ENCODE measurements at regions of chr1 and their contacts with region 1.

Region 1: DNA sequence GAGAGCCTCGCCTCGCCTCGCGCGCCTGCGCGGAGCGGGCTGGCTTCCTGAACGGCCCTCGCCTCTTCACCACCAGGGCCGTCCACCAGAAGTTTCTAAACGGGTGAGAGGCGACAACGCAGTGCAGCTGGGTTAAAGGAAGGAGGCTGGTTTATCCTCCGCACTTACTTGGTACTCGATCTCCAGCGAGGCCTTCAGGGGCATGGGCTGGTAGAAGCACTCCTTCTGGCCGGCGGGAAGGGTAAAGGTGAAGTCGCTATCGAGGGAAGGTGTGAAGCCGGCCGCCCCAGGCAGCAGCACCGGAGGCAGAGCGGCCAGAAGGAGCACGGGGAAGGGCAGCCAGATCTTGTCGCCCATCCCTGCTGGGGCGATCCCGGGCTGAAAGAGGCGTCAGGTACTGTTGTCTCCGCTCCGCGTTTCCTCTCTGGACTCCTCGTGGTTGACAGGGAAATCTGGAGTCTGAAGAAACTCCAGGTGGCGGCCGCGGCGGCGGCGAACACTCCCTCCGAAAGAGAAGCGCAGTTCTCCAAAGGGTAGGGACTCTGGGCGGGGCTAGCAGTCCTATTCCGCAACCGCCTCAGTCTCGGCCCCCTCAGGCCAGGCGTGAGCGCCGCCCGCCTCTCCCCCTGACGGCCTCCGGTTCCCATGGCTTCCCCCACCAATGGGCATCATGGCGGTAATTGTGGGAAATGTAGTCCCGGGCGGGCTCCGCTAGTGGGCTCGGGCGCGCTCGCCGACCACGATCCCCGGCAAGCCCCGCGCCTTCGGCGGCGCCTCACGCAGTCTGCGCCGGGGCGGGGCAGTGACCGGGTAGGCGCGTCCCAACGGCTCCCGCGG is at the start of gene TMED5:
- DNase-seq: peak; percentile 90 to 98 (median 95)
- ATAC-seq: peak; percentile 81
- H3K4me3 ChIP-seq: peak within 1 kb of the TSS; percentile 75 to 97
- H3K4me3 Mint-ChIP-seq: peak within 1 kb of the TSS; percentile 91
- H3K27ac ChIP-seq: peak within 1 kb of the TSS; percentile 83 to 98
- H3K27ac Mint-ChIP-seq: peak within 1 kb of the TSS; percentile 97
- H3K4me1 ChIP-seq: peaks cover 33% of the 10 kb centered on the region
- H3K4me1 Mint-ChIP-seq: peaks cover 49% of the 10 kb centered on the region
- H3K27me3 ChIP-seq: no peaks in the 10 kb centered on the region
- H3K27me3 Mint-ChIP-seq: no peaks in the 10 kb centered on the region
- CTCF ChIP-seq: peak; percentile 32
- total RNA-seq, gene TMED5: 38.3 to 38.8 TPM

Region 2: DNA sequence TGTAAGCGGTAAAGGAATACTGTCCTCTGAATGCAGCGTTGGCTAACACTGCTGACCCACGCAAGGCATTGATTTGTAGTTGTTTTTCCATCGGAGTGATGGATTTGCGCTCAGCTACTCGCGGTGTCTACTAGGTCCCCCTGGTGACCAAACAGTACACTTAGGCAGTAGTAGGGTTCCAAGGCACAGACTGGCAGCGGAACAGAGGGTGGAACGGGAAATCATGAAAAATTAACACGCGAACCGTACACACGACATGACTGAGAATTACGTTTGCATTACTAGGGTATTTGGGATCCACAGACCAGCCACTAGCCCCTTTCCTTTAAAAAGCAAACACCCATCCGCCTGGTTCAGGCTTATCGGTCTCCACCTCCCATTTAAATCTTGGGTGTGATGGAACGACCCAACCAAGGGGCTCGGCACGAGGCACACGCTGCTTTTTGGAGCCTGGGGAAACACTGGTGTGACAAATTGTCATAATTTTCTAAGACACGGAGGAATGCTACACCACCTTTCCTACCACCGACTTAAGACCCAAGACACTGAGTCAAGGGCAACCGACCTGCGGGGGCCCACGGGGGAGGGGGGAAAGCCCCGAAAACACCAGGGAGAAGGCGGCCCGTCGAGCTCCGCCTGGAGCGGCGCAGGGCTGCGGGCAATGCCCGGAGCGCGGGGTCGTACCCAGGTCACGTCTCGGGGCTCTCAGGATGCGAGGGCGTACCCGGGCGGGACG is 219.5 kb before region 1 on chr1:
- CTCF ChIA-PET with region 1: no interaction called
- POLR2A ChIA-PET with region 1: no interaction called
- intact Hi-C with region 1: loop called (anchors 1 to 5 kb)
- DNase-seq: peak; percentile 40 to 90 (median 62)
- ATAC-seq: peak; percentile 41
- H3K4me3 ChIP-seq: peak overlapping the region; percentile 81 to 82
- H3K4me3 Mint-ChIP-seq: peak overlapping the region; percentile 92
- H3K27ac ChIP-seq: peak overlapping the region; percentile 85 to 87
- H3K27ac Mint-ChIP-seq: peak overlapping the region; percentile 96
- H3K4me1 ChIP-seq: peaks cover 57% of the 10 kb centered on the region
- H3K4me1 Mint-ChIP-seq: peaks cover 40% of the 10 kb centered on the region
- H3K27me3 ChIP-seq: no peaks in the 10 kb centered on the region
- H3K27me3 Mint-ChIP-seq: no peaks in the 10 kb centered on the region
- CTCF ChIP-seq: peak; percentile 58

Region 3: GRCh38 chr1:93042187-93043056 is 137.7 kb before region 1 on chr1:
- CTCF ChIA-PET with region 1: no interaction called
- POLR2A ChIA-PET with region 1: no interaction called
- intact Hi-C with region 1: loop called (anchors 1 to 5 kb)
- DNase-seq: peak in 6 of 9 experiments; percentile 11 to 92 (median 20)
- ATAC-seq: peak; percentile 99
- H3K4me3 ChIP-seq: peak overlapping the region; percentile 32 to 44
- H3K4me3 Mint-ChIP-seq: peak overlapping the region; percentile 83
- H3K27ac ChIP-seq: peak overlapping the region; percentile 40 to 93
- H3K27ac Mint-ChIP-seq: peak overlapping the region; percentile 95
- H3K4me1 ChIP-seq: peaks cover 12% of the 10 kb centered on the region
- H3K4me1 Mint-ChIP-seq: peaks cover 13% of the 10 kb centered on the region
- H3K27me3 ChIP-seq: no peaks in the 10 kb centered on the region
- H3K27me3 Mint-ChIP-seq: no peaks in the 10 kb centered on the region
- CTCF ChIP-seq: no peak

Region 4: DNA sequence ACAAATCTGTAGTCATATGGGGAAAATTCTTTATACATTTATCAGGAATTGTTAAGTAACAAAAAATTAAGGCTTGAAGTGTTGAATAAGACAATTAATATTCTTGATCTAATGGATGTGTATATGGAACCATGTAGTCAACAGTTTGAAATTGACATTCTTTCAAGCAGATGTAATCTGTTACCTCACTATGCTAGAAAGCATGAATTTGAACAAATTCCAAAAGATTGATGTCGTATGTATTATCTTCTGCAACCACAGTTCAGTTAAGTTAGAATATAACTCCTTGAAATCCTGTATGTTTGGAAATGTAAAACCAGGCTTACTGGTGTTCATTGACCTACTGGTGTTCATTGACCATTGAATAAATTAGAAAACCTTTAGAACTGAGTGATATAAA is 16.5 kb after region 1 on chr1:
- CTCF ChIA-PET with region 1: no interaction called
- POLR2A ChIA-PET with region 1: no interaction called
- intact Hi-C with region 1: no loop called
- DNase-seq: no peak
- ATAC-seq: no peak
- H3K4me3 ChIP-seq: no peak overlapping the region
- H3K4me3 Mint-ChIP-seq: no peak overlapping the region
- H3K27ac ChIP-seq: no peak overlapping the region
- H3K27ac Mint-ChIP-seq: no peak overlapping the region
- H3K4me1 ChIP-seq: no peaks in the 10 kb centered on the region
- H3K4me1 Mint-ChIP-seq: no peaks in the 10 kb centered on the region
- H3K27me3 ChIP-seq: no peaks in the 10 kb centered on the region
- H3K27me3 Mint-ChIP-seq: no peaks in the 10 kb centered on the region
- CTCF ChIP-seq: no peak

Region 5: GRCh38 chr1:93219443-93219842 is 39.3 kb after region 1 on chr1:
- CTCF ChIA-PET with region 1: no interaction called
- POLR2A ChIA-PET with region 1: no interaction called
- intact Hi-C with region 1: loop called in 1 of 2 experiments (anchors 5 kb)
- DNase-seq: peak in 2 of 9 experiments; percentile 8 to 21
- ATAC-seq: peak; percentile 31
- H3K4me3 ChIP-seq: peak overlapping the region; percentile 2 to 34
- H3K4me3 Mint-ChIP-seq: peak overlapping the region; percentile 76
- H3K27ac ChIP-seq: no peak overlapping the region
- H3K27ac Mint-ChIP-seq: no peak overlapping the region
- H3K4me1 ChIP-seq: no peaks in the 10 kb centered on the region
- H3K4me1 Mint-ChIP-seq: peaks cover 12% of the 10 kb centered on the region
- H3K27me3 ChIP-seq: no peaks in the 10 kb centered on the region
- H3K27me3 Mint-ChIP-seq: no peaks in the 10 kb centered on the region
- CTCF ChIP-seq: no peak

Region 6: DNA sequence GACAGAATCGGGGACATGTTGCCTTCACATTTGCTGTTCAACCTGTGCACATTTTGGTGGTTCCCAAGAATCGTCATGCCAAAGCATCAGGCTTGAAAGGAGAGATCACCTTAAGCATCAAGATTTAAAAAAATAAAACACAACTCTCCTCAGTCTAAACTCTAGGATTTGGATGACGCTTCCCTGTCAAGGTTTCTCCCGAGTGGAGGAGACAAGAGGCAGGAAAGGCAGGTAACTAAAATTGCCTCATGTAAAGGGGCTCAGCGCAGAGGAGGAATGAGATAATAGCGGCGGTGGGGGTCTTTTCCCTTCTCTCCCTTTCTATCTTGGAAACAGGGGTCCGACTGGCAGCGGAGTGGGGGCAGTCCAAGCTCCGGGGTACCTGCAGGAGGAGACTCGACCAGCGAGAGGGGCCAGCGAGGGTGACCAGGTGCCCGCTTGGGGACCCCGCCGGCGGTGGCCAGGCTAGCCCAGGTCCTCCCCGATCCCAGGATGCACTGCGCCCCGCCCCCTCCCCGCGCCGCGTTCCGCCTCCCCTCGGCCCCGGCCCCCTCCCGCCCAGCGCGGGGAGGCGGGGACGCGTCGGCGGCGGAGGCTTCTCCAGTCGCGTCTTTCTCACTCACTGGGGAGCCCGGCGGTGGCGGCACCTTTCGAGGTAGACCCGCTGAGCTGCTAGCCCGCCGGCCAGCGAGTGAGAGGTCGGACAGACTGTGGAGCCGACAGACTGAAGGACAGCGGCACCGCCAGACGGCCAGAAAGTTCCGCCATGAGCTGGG is 267.6 kb after region 1 on chr1 and contains the start of gene FNBP1L:
- CTCF ChIA-PET with region 1: no interaction called
- POLR2A ChIA-PET with region 1: no interaction called
- intact Hi-C with region 1: loop called in 1 of 2 experiments (anchors 2 kb)
- DNase-seq: peak in 8 of 9 experiments; percentile 34 to 69 (median 51)
- ATAC-seq: peak; percentile 74
- H3K4me3 ChIP-seq: peak within 1 kb of the TSS; percentile 53 to 66
- H3K4me3 Mint-ChIP-seq: peak within 1 kb of the TSS; percentile 91
- H3K27ac ChIP-seq: no peak within 1 kb of the TSS
- H3K27ac Mint-ChIP-seq: no peak within 1 kb of the TSS
- H3K4me1 ChIP-seq: peaks cover 20% of the 10 kb centered on the region
- H3K4me1 Mint-ChIP-seq: peaks cover 17% of the 10 kb centered on the region
- H3K27me3 ChIP-seq: peaks cover 18 to 28% of the 10 kb centered on the region in 2 experiments
- H3K27me3 Mint-ChIP-seq: peaks cover 47% of the 10 kb centered on the region
- CTCF ChIP-seq: no peak
- total RNA-seq, gene FNBP1L: 0.31 to 0.35 TPM

Region 7: DNA sequence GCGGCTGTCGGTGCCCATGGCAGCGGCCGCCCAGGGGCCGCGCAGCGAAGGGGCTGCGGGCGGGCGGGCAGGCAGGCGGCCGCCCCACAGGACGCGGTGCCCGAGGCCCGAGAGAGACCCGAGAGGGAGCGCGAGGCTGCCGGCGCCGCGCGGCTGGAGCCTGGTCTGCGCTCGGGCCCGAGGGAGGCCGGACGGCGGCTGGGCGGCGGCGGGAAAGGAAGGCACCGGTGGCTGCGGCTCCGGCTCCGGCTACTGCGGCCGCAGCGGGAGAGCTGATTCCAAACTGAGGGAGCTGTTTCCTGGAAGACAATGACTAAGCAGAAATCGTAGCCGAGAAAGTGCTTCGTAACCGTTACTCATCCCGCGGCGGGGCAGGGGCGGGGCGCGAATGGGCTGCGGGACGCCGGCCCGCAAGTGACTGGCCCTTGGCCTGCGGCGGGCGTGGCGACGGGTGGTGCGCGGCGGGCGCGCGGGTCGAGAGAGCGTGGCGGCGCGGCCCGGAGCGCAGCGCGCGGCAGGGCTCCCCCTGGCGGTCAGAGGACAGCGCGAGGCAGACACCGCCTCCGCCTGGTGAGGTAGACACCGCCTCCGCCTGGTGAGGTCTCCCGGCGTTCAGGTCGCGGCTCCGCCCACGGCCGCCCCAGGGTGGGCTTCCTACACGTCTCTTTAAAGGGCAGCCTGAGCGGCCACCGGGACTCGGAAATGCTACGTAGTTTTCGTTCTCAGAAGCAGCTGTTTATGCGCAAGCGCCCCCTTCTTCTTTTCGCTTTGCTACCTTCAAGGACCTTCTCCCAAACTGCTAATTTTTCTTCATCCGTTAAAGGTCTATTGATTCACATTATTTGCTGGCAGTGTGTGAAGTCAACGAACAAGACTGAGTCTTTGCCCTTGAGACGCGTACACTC is 729.3 kb after region 1 on chr1 and contains the start of gene GCLM:
- CTCF ChIA-PET with region 1: no interaction called
- POLR2A ChIA-PET with region 1: no interaction called
- intact Hi-C with region 1: loop called (anchors 2 to 10 kb)
- DNase-seq: peak; percentile 76 to 95 (median 91)
- ATAC-seq: peak; percentile 89
- H3K4me3 ChIP-seq: peak within 1 kb of the TSS; percentile 62 to 67
- H3K4me3 Mint-ChIP-seq: peak within 1 kb of the TSS; percentile 88
- H3K27ac ChIP-seq: peak within 1 kb of the TSS; percentile 72 to 76
- H3K27ac Mint-ChIP-seq: peak within 1 kb of the TSS; percentile 92
- H3K4me1 ChIP-seq: peaks cover 12% of the 10 kb centered on the region
- H3K4me1 Mint-ChIP-seq: peaks cover 37% of the 10 kb centered on the region
- H3K27me3 ChIP-seq: no peaks in the 10 kb centered on the region
- H3K27me3 Mint-ChIP-seq: no peaks in the 10 kb centered on the region
- CTCF ChIP-seq: peak; percentile 86
- total RNA-seq, gene GCLM: 6.4 to 6.8 TPM

Measured in CD8-positive, alpha-beta T cell (primary cell).